Activated T-helper 2 cell treated with anti-CD3 and anti-CD28 coated beads, Interferon-gamma antibody, Interleukin-2, Interleukin-4, amounts not matched to agents 10 μg/mL and 5 μg/mL and 100 μg/mL, durations not matched to agents 14 hours and 24 hours and 36 hours (primary cell): ENCODE measurements at regions of chr1 and their contacts with region 1.

Region 1: GRCh38 chr1:41862384-41863174 is 56.1 kb downstream of the HIVEP3 start:
- DNase-seq: peak; percentile 43
- H3K4me3 Mint-ChIP-seq: no peak overlapping the region
- H3K27ac Mint-ChIP-seq: peak overlapping the region; percentile 87
- H3K4me1 Mint-ChIP-seq: peaks cover 36% of the 10 kb centered on the region
- H3K27me3 Mint-ChIP-seq: no peaks in the 10 kb centered on the region

Region 2: GRCh38 chr1:41573785-41574713 is 288.5 kb before region 1 on chr1:
- intact Hi-C with region 1: loop called (anchors 2 kb)
- DNase-seq: peak; percentile 76
- H3K4me3 Mint-ChIP-seq: no peak overlapping the region
- H3K27ac Mint-ChIP-seq: peak overlapping the region; percentile 64
- H3K4me1 Mint-ChIP-seq: peaks cover 44% of the 10 kb centered on the region
- H3K27me3 Mint-ChIP-seq: no peaks in the 10 kb centered on the region

Region 3: GRCh38 chr1:41673378-41673777 is 189.2 kb before region 1 on chr1:
- intact Hi-C with region 1: loop called (anchors 5 kb)
- DNase-seq: peak; percentile 59
- H3K4me3 Mint-ChIP-seq: peak overlapping the region; percentile 51
- H3K27ac Mint-ChIP-seq: peak overlapping the region; percentile 92
- H3K4me1 Mint-ChIP-seq: peaks cover 92% of the 10 kb centered on the region
- H3K27me3 Mint-ChIP-seq: no peaks in the 10 kb centered on the region

Region 4: DNA sequence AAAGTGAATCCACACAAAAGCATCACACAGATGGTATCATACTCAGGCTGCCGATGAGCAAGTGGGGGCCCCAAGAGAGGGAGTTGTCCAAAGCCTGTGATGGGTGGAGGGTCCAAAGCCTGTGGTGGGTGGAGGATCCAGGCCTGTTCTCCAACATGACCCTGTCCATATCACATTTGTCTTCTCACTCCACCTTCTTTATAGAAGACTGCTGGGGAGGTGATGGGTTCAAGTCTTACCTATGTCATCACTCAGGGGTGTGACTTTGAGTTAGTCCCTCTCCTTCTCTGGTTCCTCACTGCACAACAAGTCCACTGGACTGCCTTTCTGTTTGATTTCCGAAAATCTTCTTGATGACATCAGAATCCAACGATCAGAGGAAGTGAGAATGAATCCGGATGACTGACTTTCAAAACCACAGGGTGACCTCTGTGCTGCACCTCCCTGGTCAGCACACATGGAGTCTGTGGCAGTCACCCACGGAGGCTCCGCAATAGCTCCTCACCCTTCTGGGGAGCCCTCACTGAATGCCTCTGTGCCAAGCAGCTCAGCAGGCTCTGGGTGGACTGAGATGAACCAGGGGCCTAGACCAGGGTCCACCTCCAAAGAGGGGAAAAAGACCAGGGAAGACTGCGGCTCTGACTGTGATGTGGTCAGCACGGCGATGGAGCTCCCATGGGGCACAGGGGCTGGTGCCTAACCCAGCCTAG is 110.6 kb before region 1 on chr1:
- intact Hi-C with region 1: loop called (anchors 2 kb)
- DNase-seq: no peak
- H3K4me3 Mint-ChIP-seq: no peak overlapping the region
- H3K27ac Mint-ChIP-seq: peak overlapping the region; percentile 66
- H3K4me1 Mint-ChIP-seq: peaks cover 73% of the 10 kb centered on the region
- H3K27me3 Mint-ChIP-seq: no peaks in the 10 kb centered on the region

Region 5: GRCh38 chr1:41898191-41898713 is 35.7 kb after region 1 on chr1:
- intact Hi-C with region 1: loop called (anchors 2 kb)
- DNase-seq: peak; percentile 75
- H3K4me3 Mint-ChIP-seq: peak overlapping the region; percentile 45
- H3K27ac Mint-ChIP-seq: peak overlapping the region; percentile 91
- H3K4me1 Mint-ChIP-seq: peaks cover 57% of the 10 kb centered on the region
- H3K27me3 Mint-ChIP-seq: no peaks in the 10 kb centered on the region

Region 6: GRCh38 chr1:41950820-41951219 is 88.2 kb after region 1 on chr1:
- intact Hi-C with region 1: no loop called
- DNase-seq: no peak
- H3K4me3 Mint-ChIP-seq: no peak overlapping the region
- H3K27ac Mint-ChIP-seq: peak overlapping the region; percentile 25
- H3K4me1 Mint-ChIP-seq: peaks cover 14% of the 10 kb centered on the region
- H3K27me3 Mint-ChIP-seq: no peaks in the 10 kb centered on the region

Region 7: GRCh38 chr1:42017259-42017658 is 154.7 kb after region 1 on chr1:
- intact Hi-C with region 1: loop called (anchors 2 kb)
- DNase-seq: no peak
- H3K4me3 Mint-ChIP-seq: no peak overlapping the region
- H3K27ac Mint-ChIP-seq: no peak overlapping the region
- H3K4me1 Mint-ChIP-seq: peaks cover 21% of the 10 kb centered on the region
- H3K27me3 Mint-ChIP-seq: peaks cover 6% of the 10 kb centered on the region